ENCODE measurements at regions of chr4 and their contacts with region 1.

Region 1: DNA sequence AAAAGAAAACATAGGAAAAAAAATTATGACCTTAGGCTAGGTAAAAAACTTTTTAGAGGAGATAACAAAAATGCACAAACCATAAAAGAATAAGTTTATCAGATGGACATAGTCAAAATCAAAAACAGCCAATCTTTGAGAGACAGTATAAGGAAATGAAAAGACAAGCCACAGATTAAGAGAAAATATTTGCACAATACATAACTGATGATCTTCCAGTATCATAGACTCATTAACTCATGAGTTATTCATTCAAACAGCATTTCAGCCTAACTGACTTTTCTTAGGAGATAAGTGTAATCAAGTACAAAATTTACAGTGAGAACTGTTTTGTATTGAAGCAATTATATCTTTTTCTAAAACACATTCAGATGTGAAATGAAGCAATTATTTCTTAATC is 183.8 kb downstream of the FBXO8 start:
- DNase-seq: no peak
- H3K4me3 ChIP-seq: no peak overlapping the region
- H3K27ac ChIP-seq: no peak overlapping the region
- H3K4me1 ChIP-seq: no peaks in the 10 kb centered on the region
- H3K27me3 ChIP-seq: no peaks in the 10 kb centered on the region
- CTCF ChIP-seq: no peak
- EP300 ChIP-seq: no peak
- POLR2A ChIP-seq: no peak

Region 2: DNA sequence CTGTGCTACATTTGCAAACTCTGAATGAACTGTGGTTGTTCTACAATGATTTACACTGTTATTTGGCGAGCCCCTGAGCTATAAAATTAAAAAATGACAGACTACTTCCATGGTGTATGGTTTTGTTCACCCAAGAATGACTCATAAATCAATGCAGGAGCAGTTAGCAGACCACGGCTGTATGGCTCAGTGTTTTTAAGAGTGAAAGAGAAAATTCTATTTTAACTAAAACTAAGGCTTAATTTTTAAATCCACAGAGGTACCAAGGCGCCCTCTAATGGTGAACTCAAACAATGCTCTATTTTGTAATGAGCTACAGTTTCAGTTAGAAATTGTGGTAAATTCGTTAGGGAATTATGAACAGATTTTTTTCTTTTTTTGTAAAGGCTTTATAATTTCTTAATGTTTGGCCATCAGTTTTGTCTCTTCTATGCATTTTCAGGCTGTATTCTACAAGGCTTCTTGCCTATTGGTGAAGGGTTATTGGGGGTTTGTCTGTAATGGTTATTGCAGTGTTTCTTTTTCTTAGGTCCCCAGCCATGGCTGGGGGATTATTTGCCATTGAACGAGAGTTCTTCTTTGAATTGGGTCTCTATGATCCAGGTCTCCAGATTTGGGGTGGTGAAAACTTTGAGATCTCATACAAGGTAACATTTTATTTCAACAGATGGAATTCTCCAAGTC is 798.1 kb before region 1 on chr4:
- in situ Hi-C with region 1: no loop called
- intact Hi-C with region 1: no loop called
- DNase-seq: no peak
- H3K4me3 ChIP-seq: no peak overlapping the region
- H3K27ac ChIP-seq: no peak overlapping the region
- H3K4me1 ChIP-seq: peaks cover 0 to 10% (median 1%) of the 10 kb centered on the region in 4 donors
- H3K27me3 ChIP-seq: no peaks in the 10 kb centered on the region
- CTCF ChIP-seq: peak; percentile 65 to 79 (median 68)
- EP300 ChIP-seq: no peak
- POLR2A ChIP-seq: no peak

Region 3: DNA sequence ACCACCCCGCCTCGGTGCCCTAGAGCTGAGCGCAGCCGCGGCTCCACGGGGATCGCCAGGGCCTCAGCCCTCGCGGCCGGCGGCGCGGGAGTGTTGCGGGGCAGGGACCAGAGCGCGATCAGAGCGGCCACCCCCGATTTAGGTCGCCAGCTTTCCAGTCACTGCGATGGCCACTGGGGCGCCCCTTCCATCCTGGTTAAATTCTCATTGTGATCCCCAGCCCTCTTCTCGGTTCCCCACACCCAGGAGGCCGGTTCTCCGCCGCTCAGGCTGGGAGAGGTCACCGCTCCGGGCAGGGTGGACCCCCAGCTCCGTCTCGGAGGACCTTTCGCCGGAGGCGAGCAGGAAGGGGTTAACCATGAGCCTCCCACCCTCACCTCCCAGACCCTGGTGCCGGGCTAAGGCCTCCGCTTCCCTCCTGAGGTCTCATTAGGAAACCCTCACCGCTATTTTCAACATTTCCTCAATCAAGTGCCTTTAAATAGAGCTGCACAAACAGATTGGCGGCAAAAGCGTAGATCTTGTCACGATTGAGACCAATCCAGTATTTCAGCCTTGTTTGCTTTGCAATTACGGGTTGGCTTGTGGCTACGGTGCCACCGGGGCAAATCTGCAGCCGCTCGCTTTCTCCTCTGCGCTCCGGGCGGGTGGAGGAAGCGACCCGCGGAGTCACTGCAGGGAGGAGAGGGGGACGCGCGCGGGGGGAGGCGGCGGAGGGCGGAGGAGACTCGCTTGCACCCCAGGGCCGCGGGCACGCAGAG is 561.4 kb before region 1 on chr4:
- in situ Hi-C with region 1: no loop called
- intact Hi-C with region 1: no loop called
- DNase-seq: no peak
- H3K4me3 ChIP-seq: peak overlapping the region; percentile 8 to 51 (median 14)
- H3K27ac ChIP-seq: peak overlapping the region; percentile 31 to 95 (median 78)
- H3K4me1 ChIP-seq: peaks cover 0 to 13% (median 8%) of the 10 kb centered on the region in 4 donors
- H3K27me3 ChIP-seq: peaks cover 95% of the 10 kb centered on the region
- CTCF ChIP-seq: no peak
- EP300 ChIP-seq: no peak
- POLR2A ChIP-seq: no peak

Region 4: DNA sequence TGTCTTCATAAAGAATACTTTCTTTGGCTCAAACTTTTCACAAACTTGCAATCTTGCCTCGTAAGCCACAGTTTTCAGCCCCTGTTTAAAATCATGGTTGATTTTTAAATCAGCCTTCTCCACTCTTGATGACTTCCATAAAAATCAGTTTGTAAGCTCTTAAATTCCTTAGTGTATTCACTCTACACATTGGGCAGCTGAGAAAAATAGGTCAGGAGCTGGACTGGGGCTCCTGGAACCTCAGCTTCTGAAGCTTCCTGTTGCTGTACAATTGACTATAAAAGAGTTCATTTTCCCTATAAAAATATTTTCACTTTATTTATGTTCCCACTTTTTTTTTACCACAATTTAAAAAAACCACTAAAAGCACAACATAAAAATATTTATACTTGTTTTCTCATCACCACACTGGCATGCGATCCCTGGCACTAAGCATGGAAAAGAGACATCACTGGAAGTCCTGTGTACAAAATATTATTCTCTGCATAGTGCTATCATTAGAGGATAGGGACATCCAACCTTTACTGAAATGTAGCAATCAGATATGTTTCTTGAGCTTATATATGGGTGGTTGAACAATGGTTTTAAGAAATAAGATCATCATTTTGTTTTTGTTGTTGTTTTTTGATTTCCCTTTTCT is 162.0 kb before region 1 on chr4:
- in situ Hi-C with region 1: no loop called
- intact Hi-C with region 1: no loop called
- DNase-seq: no peak
- H3K4me3 ChIP-seq: no peak overlapping the region
- H3K27ac ChIP-seq: peak overlapping the region in 1 of 4 donors; percentile 7
- H3K4me1 ChIP-seq: no peaks in the 10 kb centered on the region
- H3K27me3 ChIP-seq: no peaks in the 10 kb centered on the region
- CTCF ChIP-seq: no peak
- EP300 ChIP-seq: no peak
- POLR2A ChIP-seq: no peak

Region 5: GRCh38 chr4:174023641-174024040 is 76.1 kb before region 1 on chr4:
- in situ Hi-C with region 1: no loop called
- intact Hi-C with region 1: loop called (anchors 2 kb)
- DNase-seq: no peak
- H3K4me3 ChIP-seq: no peak overlapping the region
- H3K27ac ChIP-seq: no peak overlapping the region
- H3K4me1 ChIP-seq: no peaks in the 10 kb centered on the region
- H3K27me3 ChIP-seq: no peaks in the 10 kb centered on the region
- CTCF ChIP-seq: no peak
- EP300 ChIP-seq: no peak
- POLR2A ChIP-seq: no peak

Region 6: GRCh38 chr4:174120446-174121295 is 21.0 kb after region 1 on chr4:
- in situ Hi-C with region 1: no loop called
- intact Hi-C with region 1: no loop called
- DNase-seq: no peak
- H3K4me3 ChIP-seq: peak overlapping the region in 3 of 4 donors; percentile 4 to 28 (median 13)
- H3K27ac ChIP-seq: peak overlapping the region; percentile 18 to 66 (median 47)
- H3K4me1 ChIP-seq: peaks cover 0 to 9% (median 3%) of the 10 kb centered on the region in 4 donors
- H3K27me3 ChIP-seq: peaks cover 4% of the 10 kb centered on the region
- CTCF ChIP-seq: peak; percentile 54 to 70 (median 55)
- EP300 ChIP-seq: no peak
- POLR2A ChIP-seq: no peak

Measured in transverse colon (tissue), 4 donors.